ENCODE measurements at regions of chr3 and their contacts with region 1.

Region 1: GRCh38 chr3:48018841-48019240 is 2.6 kb upstream of the MAP4 start:
- DNase-seq: peak in 4 of 5 donors; percentile 16 to 59 (median 28)
- ATAC-seq: peak in 3 of 4 donors; percentile 53 to 74 (median 67)
- H3K4me3 ChIP-seq: no peak overlapping the region
- H3K27ac ChIP-seq: peak overlapping the region; percentile 16 to 87 (median 78)
- H3K4me1 ChIP-seq: peaks cover 10 to 84% (median 54%) of the 10 kb centered on the region in 12 donors
- H3K27me3 ChIP-seq: no peaks in the 10 kb centered on the region
- CTCF ChIP-seq: no peak
- POLR2A ChIP-seq: no peak

Region 2: GRCh38 chr3:47849699-47850563 is 168.9 kb before region 1 on chr3:
- intact Hi-C with region 1: no loop called
- DNase-seq: no peak
- ATAC-seq: peak in 2 of 4 donors; percentile 3 to 21
- H3K4me3 ChIP-seq: no peak overlapping the region
- H3K27ac ChIP-seq: peak overlapping the region in 1 of 12 donors; percentile 8
- H3K4me1 ChIP-seq: peaks cover 0 to 8% (median 0%) of the 10 kb centered on the region in 12 donors
- H3K27me3 ChIP-seq: no peaks in the 10 kb centered on the region
- CTCF ChIP-seq: peak in 10 of 12 donors; percentile 9 to 41 (median 20)
- POLR2A ChIP-seq: no peak

Region 3: GRCh38 chr3:48034000-48034516 is 15.2 kb after region 1 on chr3:
- intact Hi-C with region 1: loop called in 1 of 10 experiments (anchors 2 kb)
- DNase-seq: no peak
- ATAC-seq: peak; percentile 74 to 90 (median 77)
- H3K4me3 ChIP-seq: no peak overlapping the region
- H3K27ac ChIP-seq: peak overlapping the region; percentile 40 to 93 (median 82)
- H3K4me1 ChIP-seq: peaks cover 4 to 92% (median 69%) of the 10 kb centered on the region in 12 donors
- H3K27me3 ChIP-seq: no peaks in the 10 kb centered on the region
- CTCF ChIP-seq: no peak
- POLR2A ChIP-seq: no peak

Region 4: GRCh38 chr3:48064292-48064829 is 45.5 kb after region 1 on chr3:
- intact Hi-C with region 1: no loop called
- DNase-seq: no peak
- ATAC-seq: peak; percentile 27 to 47 (median 29)
- H3K4me3 ChIP-seq: no peak overlapping the region
- H3K27ac ChIP-seq: no peak overlapping the region
- H3K4me1 ChIP-seq: peaks cover 0 to 59% (median 46%) of the 10 kb centered on the region in 12 donors
- H3K27me3 ChIP-seq: no peaks in the 10 kb centered on the region
- CTCF ChIP-seq: no peak
- POLR2A ChIP-seq: no peak

Region 5: GRCh38 chr3:48130321-48130904 is 111.6 kb after region 1 on chr3:
- intact Hi-C with region 1: no loop called
- DNase-seq: peak; percentile 89 to 94 (median 91)
- ATAC-seq: peak; percentile 95 to 98 (median 98)
- H3K4me3 ChIP-seq: peak overlapping the region in 3 of 12 donors; percentile 2 to 26 (median 8)
- H3K27ac ChIP-seq: peak overlapping the region; percentile 68 to 91 (median 83)
- H3K4me1 ChIP-seq: peaks cover 0 to 31% (median 22%) of the 10 kb centered on the region in 12 donors
- H3K27me3 ChIP-seq: no peaks in the 10 kb centered on the region
- CTCF ChIP-seq: no peak
- POLR2A ChIP-seq: no peak

Measured in heart left ventricle (tissue), 16 donors.